ENCODE measurements at regions of chr10 and their contacts with region 1.

Region 1: DNA sequence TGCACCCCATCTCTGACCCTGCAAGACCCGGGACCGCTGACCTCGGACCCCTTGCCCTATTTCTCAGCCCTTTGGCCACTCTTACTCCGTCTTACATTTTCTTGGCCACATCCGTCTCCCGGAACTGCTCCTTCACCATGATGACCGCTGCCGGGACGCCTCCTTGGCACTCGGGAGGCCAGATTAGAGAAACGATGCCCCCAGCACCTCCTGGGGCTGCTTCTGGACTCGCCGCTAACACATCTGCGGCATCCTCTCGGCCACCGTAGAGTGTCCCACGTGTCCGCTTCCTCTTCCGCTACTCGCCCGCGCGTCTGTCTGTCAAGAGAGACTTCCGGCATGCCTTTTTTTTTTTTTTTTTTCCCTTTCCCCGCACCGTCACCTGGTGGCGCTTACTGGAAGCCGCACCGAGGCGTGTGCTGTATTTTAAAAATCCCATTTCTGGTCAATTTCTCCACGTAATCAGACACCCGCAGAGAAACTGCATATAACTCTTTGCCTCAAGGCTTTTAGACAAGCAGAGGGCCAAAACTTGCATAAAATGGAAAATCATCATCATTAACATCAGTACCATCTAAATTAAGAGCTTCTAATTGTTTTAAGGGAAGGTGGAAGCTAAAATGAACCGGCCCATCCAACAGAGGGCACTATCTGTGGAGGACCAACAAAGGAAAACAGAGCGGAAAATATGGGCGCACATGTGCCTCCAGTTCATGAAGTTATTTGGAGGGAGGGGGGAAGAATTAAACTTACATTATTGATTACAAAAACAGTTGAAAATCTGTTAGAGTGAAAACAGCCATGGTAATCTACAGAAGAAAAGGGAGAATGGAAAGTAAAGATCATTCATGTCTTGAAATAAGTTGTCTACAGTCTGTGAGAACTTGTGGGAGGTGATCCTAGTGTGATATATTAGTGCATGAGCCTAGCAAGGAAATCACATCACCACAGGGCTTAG is at the start of gene POLR3A:
- DNase-seq: peak; percentile 100
- ATAC-seq: peak; percentile 48
- H3K4me3 ChIP-seq: peak within 1 kb of the TSS; percentile 69
- H3K27ac ChIP-seq: peak within 1 kb of the TSS; percentile 23
- H3K4me1 ChIP-seq: peaks cover 47% of the 10 kb centered on the region
- H3K27me3 ChIP-seq: no peaks in the 10 kb centered on the region
- CTCF ChIP-seq: peak; percentile 100
- total RNA-seq, gene POLR3A: 97.0 and 97.2 TPM in 2 replicates

Region 2: DNA sequence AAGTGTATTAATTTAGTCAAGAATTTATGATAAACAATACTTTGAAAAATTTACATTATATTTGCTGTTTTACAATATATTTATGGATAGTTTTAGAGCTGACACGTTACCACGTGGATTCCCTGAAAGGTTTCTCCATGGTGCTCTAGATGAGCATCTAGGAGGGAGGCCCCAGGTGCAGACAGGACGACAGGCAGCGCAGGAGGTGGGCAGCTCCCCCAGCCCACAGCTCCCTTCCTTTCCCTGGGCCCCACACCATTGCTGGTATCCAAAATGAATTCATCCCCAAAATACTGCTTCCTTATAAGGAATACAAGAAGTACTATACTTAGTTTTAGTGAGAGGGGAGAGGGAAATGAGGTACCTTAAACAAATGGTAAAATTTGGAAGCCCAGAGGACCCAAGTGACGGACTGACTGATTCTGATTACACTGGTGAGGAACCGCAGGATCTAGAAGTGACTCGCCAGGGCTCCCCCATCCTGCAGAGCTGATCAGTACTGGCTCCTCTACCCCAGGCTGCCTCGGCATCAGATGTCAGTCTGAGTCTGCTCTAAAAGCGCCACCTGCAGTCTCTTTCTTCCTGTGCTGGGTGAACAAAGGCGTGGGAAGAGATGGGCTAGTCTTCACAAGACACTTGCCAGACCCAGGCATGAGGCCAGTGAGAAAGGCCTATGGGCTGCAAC is 192.2 kb before region 1 on chr10:
- CTCF ChIA-PET with region 1: interaction called, 3 read pairs
- POLR2A ChIA-PET with region 1: interaction called, 3 read pairs
- intact Hi-C with region 1: loop called (anchors 2 kb)
- DNase-seq: peak; percentile 79
- ATAC-seq: peak; percentile 69
- H3K4me3 ChIP-seq: no peak overlapping the region
- H3K27ac ChIP-seq: no peak overlapping the region
- H3K4me1 ChIP-seq: peaks cover 9% of the 10 kb centered on the region
- H3K27me3 ChIP-seq: no peaks in the 10 kb centered on the region
- CTCF ChIP-seq: peak; percentile 86

Region 3: GRCh38 chr10:77898647-77899477 is 130.7 kb before region 1 on chr10:
- CTCF ChIA-PET with region 1: interaction called, 17 read pairs
- POLR2A ChIA-PET with region 1: no interaction called
- intact Hi-C with region 1: no loop called
- DNase-seq: peak; percentile 99
- ATAC-seq: peak; percentile 93
- H3K4me3 ChIP-seq: no peak overlapping the region
- H3K27ac ChIP-seq: peak overlapping the region; percentile 4
- H3K4me1 ChIP-seq: peaks cover 19% of the 10 kb centered on the region
- H3K27me3 ChIP-seq: no peaks in the 10 kb centered on the region
- CTCF ChIP-seq: no peak

Region 4: DNA sequence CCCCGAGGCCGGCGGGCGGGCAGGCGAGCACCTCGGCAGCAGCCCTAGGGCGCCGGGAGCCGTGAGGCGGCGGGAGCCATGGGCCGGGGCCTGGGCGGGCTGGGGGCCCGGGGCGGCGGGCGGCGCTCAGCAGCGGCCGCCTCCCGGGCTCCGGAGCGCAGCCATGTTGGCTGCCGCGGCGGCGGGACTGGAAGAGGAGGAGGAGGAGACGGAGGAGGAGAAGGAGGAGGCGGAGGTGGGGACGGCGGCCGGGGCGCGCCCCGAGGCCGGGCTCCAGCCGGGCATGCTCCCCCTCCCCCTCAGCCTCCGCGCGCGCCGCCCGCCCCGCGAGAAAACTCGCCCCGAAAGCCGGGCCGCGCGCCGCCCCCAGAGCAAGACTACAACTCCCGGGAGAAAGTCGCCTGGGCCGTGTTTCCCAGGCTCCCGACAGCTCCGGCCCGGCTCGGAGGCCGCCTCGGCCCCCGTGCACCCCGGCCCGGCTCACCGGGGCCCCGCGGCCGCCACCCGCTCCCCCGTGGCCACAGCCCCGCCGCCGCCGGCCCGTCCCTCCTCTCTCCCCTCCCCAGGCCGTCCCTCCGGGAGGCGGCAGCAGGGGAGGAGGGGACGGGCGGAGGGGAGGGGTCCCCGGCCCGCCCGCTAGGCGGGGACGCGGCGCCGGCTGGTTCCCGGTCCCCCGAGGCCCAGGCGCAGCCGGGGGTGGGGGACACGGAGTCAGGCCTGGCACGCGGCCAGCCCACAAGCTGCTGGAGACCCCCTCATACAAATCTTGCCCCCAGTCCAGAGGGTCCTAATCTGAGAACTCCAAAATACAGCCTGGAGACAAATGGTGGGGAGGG is 102.8 kb before region 1 on chr10 and contains the start of gene DLG5:
- CTCF ChIA-PET with region 1: interaction called, 4 read pairs
- POLR2A ChIA-PET with region 1: no interaction called
- intact Hi-C with region 1: loop called (anchors 2 kb)
- DNase-seq: peak; percentile 89
- ATAC-seq: peak; percentile 77
- H3K4me3 ChIP-seq: peak within 1 kb of the TSS; percentile 74
- H3K27ac ChIP-seq: no peak within 1 kb of the TSS
- H3K4me1 ChIP-seq: peaks cover 39% of the 10 kb centered on the region
- H3K27me3 ChIP-seq: no peaks in the 10 kb centered on the region
- CTCF ChIP-seq: peak; percentile 34; the same call in 1 of the 2 replicates
- total RNA-seq, gene DLG5: 118 and 158 TPM in 2 replicates